ENCODE measurements at regions of chrX and their contacts with region 1.

Region 1: DNA sequence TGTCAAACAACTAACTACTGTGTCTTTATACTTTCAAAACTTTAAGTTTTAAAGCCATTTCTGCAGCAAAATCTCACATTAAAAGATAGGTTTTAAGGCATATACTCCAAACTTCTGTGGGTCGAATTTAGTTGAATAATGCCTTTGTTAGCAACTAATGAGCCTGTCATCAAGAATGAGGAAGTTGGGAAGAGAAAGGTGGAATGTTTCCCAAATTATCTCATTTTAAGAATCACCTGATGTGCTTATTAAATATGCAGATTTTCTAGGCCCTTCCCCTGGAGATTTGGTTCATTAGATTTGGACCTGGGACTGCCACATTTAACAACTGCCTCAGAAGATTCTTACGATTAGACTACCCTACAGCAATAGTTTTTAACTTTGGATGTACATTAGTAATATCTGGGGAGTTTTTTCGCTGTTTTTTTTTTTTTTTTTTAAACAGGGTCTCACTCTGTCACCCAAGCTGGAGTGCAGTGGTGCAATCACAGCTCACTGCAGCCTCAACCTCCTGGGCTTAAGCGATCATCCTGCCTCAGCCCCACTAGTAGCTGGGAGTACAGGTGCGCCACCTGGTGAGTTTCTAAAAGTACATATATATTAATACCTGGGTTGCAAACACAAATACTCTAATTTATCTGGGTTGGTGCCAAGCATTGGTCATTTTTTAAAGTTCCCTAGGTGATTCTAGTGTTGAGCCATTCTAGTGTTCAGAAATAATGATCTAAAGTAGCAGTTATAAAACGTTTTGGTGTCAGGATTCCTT is 16.1 kb upstream of the TASL start:
- DNase-seq: no peak
- ATAC-seq: peak; percentile 49
- H3K4me3 Mint-ChIP-seq: peak overlapping the region; percentile 36
- H3K27ac Mint-ChIP-seq: peak overlapping the region; percentile 84
- H3K4me1 Mint-ChIP-seq: peaks cover 70% of the 10 kb centered on the region
- H3K27me3 Mint-ChIP-seq: no peaks in the 10 kb centered on the region
- CTCF ChIP-seq: no peak

Region 2: GRCh38 chrX:30275498-30275897 is 318.1 kb before region 1 on chrX:
- CTCF ChIA-PET with region 1: no interaction called
- POLR2A ChIA-PET with region 1: no interaction called
- intact Hi-C with region 1: loop called (anchors 10 kb)
- DNase-seq: no peak
- ATAC-seq: no peak
- H3K4me3 Mint-ChIP-seq: no peak overlapping the region
- H3K27ac Mint-ChIP-seq: no peak overlapping the region
- H3K4me1 Mint-ChIP-seq: no peaks in the 10 kb centered on the region
- H3K27me3 Mint-ChIP-seq: no peaks in the 10 kb centered on the region
- CTCF ChIP-seq: no peak

Region 3: GRCh38 chrX:30570505-30570904 is 23.1 kb before region 1 on chrX:
- CTCF ChIA-PET with region 1: interaction called, 34 read pairs
- POLR2A ChIA-PET with region 1: interaction called, 14 read pairs
- intact Hi-C with region 1: loop called (anchors 1 kb)
- DNase-seq: no peak
- ATAC-seq: no peak
- H3K4me3 Mint-ChIP-seq: no peak overlapping the region
- H3K27ac Mint-ChIP-seq: no peak overlapping the region
- H3K4me1 Mint-ChIP-seq: peaks cover 57% of the 10 kb centered on the region
- H3K27me3 Mint-ChIP-seq: no peaks in the 10 kb centered on the region
- CTCF ChIP-seq: no peak

Region 4: DNA sequence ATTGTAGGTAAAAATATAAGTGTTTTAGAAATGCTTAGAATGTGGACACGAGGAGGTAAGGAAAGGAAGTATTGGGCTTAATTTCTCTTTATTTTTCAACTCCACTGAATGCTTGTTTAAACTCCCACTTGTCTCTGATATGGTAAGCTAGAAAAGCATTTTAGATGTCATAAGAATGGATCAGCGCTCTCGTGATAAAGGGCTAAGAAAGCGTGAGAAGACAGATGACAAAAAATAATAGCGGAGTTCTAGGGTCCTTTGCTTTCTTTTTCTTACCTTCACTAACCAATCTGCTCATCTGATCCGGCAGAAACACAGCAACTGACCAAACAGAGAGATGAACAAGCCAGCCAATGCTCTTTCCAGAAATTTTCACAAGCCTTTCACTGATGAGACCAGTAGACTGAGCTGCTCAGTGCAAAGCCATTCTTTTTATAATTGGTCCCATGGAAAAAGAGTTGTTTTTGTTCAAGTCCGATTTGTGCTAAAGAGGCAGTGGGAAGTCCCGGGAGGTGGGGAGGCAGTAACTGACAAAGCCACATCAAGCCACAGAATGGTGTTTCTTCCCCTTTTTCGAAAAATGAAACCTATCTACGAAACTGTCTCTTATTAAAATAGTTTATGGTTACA is 16.1 kb before region 1 on chrX and contains the start of gene TASL:
- CTCF ChIA-PET with region 1: interaction called, 16 read pairs
- POLR2A ChIA-PET with region 1: interaction called, 25 read pairs
- intact Hi-C with region 1: loop called (anchors 1 kb)
- DNase-seq: peak; percentile 17
- ATAC-seq: peak; percentile 84
- H3K4me3 Mint-ChIP-seq: peak within 1 kb of the TSS; percentile 93
- H3K27ac Mint-ChIP-seq: peak within 1 kb of the TSS; percentile 96
- H3K4me1 Mint-ChIP-seq: peaks cover 37% of the 10 kb centered on the region
- H3K27me3 Mint-ChIP-seq: no peaks in the 10 kb centered on the region
- CTCF ChIP-seq: no peak
- total RNA-seq, gene TASL: 27.0 and 27.7 TPM in 2 replicates

Region 5: DNA sequence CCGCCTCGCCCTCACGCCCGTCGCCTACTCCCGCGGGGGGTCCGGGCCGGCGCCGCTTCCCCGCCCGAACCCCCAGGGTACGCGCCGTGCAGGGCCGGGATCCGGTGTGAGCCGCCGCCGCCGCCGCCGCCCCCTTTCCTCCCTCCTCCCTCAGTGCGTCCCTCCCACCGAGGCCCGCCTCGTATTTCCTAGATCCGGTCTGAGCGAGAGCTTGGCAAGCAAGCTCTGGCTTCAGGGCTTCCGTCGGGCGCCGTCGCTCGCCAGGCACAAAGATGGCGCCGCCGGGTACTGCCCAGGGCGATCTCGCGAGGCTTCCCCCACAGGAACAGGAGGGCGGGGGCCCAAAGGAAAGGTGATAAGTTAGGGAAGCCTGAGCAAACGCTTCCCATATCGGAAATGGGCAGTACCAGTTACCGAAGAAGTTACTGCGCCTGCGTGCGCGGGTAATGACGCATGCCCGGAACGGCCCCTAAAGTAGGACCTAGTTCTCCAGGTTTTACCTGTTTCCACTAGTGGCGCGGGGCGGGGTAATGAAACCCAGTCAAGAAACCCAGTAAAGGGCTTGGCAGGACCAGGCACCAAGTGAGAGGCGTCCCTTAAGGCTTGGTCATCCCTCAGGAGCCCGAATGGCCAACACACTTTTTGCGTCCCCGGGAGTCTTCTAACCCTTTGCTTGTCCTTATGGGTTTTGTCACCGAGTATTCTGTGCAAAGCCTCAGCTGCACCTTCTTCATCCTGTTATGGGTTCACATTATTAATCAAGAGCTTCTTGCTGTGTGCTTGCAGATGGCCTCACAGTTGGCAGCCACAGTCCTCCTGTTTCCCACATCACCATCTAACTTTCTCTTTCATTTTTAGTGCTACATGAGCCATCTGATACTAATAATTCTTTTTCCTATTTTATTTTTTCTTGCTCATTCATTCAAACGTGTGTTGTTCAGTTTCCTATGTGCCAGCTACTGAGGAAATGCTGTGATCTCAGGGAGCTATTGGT is 295.8 kb after region 1 on chrX and contains the start of gene TAB3:
- CTCF ChIA-PET with region 1: no interaction called
- POLR2A ChIA-PET with region 1: no interaction called
- intact Hi-C with region 1: loop called (anchors 2 kb)
- DNase-seq: peak; percentile 80
- ATAC-seq: peak; percentile 92
- H3K4me3 Mint-ChIP-seq: peak within 1 kb of the TSS; percentile 91
- H3K27ac Mint-ChIP-seq: peak within 1 kb of the TSS; percentile 94
- H3K4me1 Mint-ChIP-seq: peaks cover 23% of the 10 kb centered on the region
- H3K27me3 Mint-ChIP-seq: no peaks in the 10 kb centered on the region
- CTCF ChIP-seq: no peak
- total RNA-seq, gene TAB3: 21.7 and 23.9 TPM in 2 replicates

Measured in activated B cell treated with CpG ODN at 0.5 μM for 24 hours (primary cell).